ENCODE measurements at regions of chr1 and their contacts with region 1.

Region 1: DNA sequence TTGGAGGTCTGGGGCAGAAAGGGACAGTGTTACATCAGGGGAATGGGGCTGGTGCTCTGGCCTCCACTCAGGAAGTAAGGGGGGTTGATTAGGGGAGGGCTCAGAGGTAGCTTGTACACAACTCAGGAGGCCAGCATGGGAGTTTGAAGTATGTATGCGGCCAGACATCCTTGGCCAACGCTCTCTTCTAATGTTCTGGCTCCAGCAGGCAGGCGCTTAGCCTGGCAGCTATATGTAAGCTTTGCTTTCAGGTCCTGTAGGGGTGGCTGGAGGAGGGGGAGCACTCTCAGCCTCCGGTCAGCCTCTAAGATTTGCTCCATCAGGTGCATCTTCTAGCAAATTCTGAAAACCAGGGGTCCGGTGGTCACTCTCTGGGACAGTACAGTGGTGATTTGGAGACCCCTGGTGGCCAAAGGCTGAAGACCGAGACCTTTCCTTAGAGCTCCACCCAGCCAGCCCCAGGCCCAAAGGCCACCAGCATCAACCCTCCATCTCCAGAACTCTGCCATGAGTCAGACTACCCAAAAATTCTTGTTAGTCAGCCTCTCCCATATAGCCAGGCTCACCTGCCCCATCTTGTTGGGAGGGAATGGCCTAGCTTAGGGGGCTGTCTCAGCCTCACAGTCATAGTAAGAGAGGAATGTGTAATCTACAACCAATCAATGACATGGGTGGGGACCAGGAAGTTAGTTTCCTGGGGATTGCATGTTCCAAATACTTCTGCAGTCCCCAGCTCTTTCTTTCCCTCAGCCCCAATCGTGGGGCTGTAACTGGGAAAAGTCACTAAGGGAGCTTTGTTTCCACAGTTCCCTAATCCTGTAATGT is 9.7 kb upstream of the COL8A2 start:
- DNase-seq: peak; percentile 58
- H3K4me3 ChIP-seq: no peak overlapping the region
- H3K27ac ChIP-seq: no peak overlapping the region
- H3K4me1 ChIP-seq: no peaks in the 10 kb centered on the region
- H3K27me3 ChIP-seq: no peaks in the 10 kb centered on the region
- CTCF ChIP-seq: peak; percentile 53

Region 2: DNA sequence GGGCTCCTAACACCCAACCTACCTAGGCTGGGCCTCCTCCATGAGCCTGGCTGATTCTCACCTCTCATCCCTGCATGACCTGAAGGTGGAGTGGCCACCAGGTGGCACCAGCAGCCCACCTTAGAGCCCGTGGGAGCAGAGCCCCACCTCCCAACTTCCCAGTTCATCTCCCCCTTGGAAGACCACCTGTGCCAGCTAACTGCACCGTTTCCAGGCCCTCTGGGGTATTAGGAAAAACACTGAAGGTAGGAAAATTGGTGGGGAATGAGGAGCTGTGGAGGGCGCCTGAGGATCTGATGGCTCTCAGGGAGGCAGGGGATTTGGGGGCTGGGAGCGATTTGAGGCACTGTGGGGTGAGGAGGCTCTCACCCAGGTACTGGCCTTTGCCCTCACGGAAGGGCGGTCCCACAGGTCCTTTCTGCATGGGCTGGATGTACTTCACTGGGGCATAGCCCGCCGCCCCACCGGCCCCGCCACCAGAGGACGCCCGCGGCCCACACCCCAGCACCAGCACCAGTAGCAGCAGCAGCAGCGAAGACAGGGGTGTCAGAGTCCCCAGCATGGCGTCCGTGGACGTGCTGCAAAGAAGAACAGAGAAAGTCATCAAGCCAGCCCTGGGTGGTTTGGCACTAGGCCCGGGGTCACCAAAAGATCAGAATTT is 34.9 kb before region 1 on chr1:
- intact Hi-C with region 1: loop called (anchors 5 kb)
- DNase-seq: peak; percentile 82
- H3K4me3 ChIP-seq: no peak overlapping the region
- H3K27ac ChIP-seq: no peak overlapping the region
- H3K4me1 ChIP-seq: no peaks in the 10 kb centered on the region
- H3K27me3 ChIP-seq: no peaks in the 10 kb centered on the region
- CTCF ChIP-seq: peak; percentile 87

Region 3: GRCh38 chr1:36160949-36161485 is 26.3 kb after region 1 on chr1:
- intact Hi-C with region 1: no loop called
- DNase-seq: no peak
- H3K4me3 ChIP-seq: peak overlapping the region; percentile 21
- H3K27ac ChIP-seq: peak overlapping the region; percentile 81
- H3K4me1 ChIP-seq: peaks cover 19% of the 10 kb centered on the region
- H3K27me3 ChIP-seq: no peaks in the 10 kb centered on the region
- CTCF ChIP-seq: no peak

Region 4: GRCh38 chr1:36411674-36412520 is 277.2 kb after region 1 on chr1:
- intact Hi-C with region 1: no loop called
- DNase-seq: no peak
- H3K4me3 ChIP-seq: no peak overlapping the region
- H3K27ac ChIP-seq: no peak overlapping the region
- H3K4me1 ChIP-seq: no peaks in the 10 kb centered on the region
- H3K27me3 ChIP-seq: no peaks in the 10 kb centered on the region
- CTCF ChIP-seq: no peak

Region 5: DNA sequence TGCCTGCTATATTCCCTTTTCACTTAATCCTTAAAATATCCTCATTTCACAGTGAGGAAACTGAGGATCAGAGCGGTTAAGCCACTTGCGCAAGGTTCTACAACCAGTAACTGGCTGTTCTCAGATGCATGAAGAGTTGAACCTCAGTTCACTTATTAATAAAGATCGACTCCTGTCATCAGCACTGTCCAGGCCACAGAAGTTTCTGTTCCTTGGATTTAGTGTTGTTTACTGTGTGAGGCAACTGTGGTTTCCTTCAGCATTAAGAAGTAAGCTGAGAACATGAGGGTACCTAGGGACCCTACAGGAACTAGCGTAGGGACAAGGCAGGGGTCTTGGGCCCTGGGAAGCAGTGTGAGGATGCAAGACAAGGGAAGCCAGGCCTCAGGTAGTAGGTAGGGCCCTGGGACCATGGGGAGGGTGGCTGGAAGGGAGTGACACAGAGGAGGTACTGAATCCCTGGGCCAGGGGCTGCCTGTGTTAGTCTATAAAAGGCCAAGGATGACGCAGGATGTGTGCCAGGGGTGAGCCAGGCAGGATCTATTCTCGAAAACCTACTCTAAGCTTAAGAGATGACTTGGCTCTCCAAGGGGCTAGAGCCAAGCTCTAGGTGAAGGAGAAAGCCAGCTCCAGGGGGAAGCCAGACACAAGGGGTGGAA is 529.2 kb after region 1 on chr1:
- intact Hi-C with region 1: no loop called
- DNase-seq: no peak
- H3K4me3 ChIP-seq: no peak overlapping the region
- H3K27ac ChIP-seq: no peak overlapping the region
- H3K4me1 ChIP-seq: no peaks in the 10 kb centered on the region
- H3K27me3 ChIP-seq: no peaks in the 10 kb centered on the region
- CTCF ChIP-seq: no peak

Measured in colonic mucosa (tissue), 4 donors.